Activated CD4-positive, alpha-beta T cell treated with anti-CD3 and anti-CD28 coated beads, Interleukin-2, amount 10 ng/mL, durations not matched to agents 24 days and 14 days (primary cell): ENCODE measurements at regions of chr7 and their contacts with region 1.

Region 1: DNA sequence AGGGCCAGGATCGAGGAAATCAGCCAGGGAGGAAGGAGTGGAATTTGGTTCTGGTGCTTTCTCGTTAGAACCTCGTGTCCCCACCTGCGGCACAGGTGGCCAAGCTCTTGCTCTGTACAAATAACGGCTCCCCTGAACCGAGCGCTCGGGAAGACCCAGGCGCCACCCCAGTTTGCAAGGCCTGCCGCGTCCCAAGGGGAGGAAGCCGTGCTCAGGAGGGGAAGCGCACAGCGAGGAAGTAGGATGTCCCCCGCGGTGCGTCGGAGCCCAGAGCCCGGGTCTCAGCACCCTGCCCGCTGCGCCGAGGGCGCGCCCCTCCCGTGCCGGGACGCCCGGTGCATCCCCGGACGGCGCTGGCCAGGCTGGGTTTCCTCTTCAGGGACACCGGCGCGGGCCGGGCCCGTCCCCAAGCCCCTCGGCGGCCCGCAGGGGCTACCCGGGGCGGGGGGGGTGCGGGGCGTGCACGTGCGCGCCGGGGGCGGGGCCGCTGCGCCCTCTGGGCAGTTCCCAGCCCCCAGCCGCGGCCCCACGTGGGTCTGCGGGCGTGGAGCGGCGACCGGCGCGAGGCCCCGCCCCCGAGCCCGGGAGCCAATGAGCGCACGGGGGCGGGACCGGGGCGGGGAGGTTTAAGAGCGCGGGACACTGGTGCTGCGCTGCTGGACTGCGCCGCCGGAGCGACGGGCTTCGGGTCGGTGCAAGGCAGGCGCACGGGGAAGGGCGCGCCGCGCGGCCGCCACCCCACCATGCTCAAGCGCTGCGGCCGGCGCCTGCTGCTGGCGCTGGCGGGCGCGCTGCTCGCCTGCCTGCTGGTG is at the start of gene LFNG:
- DNase-seq: peak; percentile 96
- H3K4me3 Mint-ChIP-seq: peak within 1 kb of the TSS; percentile 97
- H3K27ac Mint-ChIP-seq: peak within 1 kb of the TSS; percentile 91
- H3K4me1 Mint-ChIP-seq: peaks cover 35% of the 10 kb centered on the region
- H3K27me3 Mint-ChIP-seq: peaks cover 7% of the 10 kb centered on the region
- total RNA-seq, gene LFNG: 33.9 and 34.2 TPM in 2 replicates

Region 2: GRCh38 chr7:1473864-1474512 is 1045.3 kb before region 1 on chr7:
- intact Hi-C with region 1: no loop called
- DNase-seq: peak; percentile 94
- H3K4me3 Mint-ChIP-seq: no peak overlapping the region
- H3K27ac Mint-ChIP-seq: no peak overlapping the region
- H3K4me1 Mint-ChIP-seq: peaks cover 2% of the 10 kb centered on the region
- H3K27me3 Mint-ChIP-seq: no peaks in the 10 kb centered on the region

Region 3: DNA sequence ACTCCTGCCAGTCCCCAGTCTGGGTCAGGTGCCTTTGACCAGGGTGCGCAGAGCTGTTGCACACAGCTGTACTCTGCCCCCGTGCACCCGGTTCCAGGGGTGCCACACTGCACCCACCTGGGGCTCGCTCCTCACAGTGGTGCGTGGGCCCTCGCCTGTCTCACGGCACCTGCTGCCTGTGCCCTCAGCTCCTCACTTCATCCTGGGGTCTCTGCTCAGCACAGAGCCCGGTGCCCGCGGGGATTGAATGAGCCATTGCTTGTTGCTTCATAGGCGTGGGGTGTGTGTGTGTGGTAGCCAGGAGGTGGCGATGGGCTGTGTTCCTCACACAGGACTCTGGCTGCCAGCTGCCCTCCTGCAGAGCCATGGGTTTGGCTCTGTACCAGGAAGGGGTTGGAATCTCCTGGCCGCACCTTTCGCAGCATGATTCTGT is 146.2 kb before region 1 on chr7:
- intact Hi-C with region 1: no loop called
- DNase-seq: no peak
- H3K4me3 Mint-ChIP-seq: no peak overlapping the region
- H3K27ac Mint-ChIP-seq: no peak overlapping the region
- H3K4me1 Mint-ChIP-seq: peaks cover 4% of the 10 kb centered on the region
- H3K27me3 Mint-ChIP-seq: no peaks in the 10 kb centered on the region

Region 4: DNA sequence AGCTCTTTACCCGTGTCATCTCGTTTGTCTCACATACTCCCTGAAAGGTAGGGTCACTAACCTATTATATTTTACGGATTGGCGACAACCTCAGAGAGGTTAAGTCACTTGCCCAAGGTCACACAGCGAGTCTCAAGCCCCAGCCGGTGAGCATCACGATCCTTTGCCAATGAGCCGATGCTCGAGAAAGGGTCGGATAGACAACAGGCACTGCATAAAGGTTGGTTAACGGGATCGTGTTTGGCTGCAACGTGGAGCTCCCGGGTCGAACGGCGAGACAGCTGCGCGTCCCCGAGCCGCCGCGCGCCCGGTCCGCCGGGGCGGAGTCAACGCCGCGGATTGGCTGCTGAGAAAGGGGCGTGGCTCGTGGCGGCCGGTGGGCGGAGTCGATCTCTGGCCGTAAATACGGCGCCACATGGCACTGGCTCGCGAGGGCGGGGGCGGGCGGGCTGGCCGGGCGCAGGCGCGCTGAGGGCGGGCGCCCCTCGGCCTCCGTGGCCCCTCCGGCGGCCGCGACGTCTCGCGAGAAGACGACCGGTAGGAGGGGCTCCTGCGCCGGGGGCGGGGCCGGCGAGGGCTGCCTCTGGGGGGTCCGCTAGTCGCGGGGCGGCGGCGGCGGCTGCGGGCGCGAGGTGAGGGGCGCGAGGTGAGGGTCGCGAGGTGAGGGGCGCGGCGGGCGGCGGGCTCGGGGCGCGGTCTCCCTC is 116.2 kb before region 1 on chr7 and contains the start of gene CHST12:
- intact Hi-C with region 1: loop called (anchors 5 kb)
- DNase-seq: peak; percentile 99
- H3K4me3 Mint-ChIP-seq: peak within 1 kb of the TSS; percentile 91
- H3K27ac Mint-ChIP-seq: peak within 1 kb of the TSS; percentile 85
- H3K4me1 Mint-ChIP-seq: peaks cover 47% of the 10 kb centered on the region
- H3K27me3 Mint-ChIP-seq: no peaks in the 10 kb centered on the region
- total RNA-seq, gene CHST12: 5.8 and 6.4 TPM in 2 replicates

Region 5: GRCh38 chr7:2508327-2509215 is 10.8 kb before region 1 on chr7:
- intact Hi-C with region 1: loop called (anchors 1 kb)
- DNase-seq: peak; percentile 93
- H3K4me3 Mint-ChIP-seq: peak overlapping the region; percentile 67
- H3K27ac Mint-ChIP-seq: peak overlapping the region; percentile 81
- H3K4me1 Mint-ChIP-seq: peaks cover 39% of the 10 kb centered on the region
- H3K27me3 Mint-ChIP-seq: no peaks in the 10 kb centered on the region

Region 6: GRCh38 chr7:2555121-2556052 is 36.1 kb after region 1 on chr7 and contains the start of gene BRAT1:
- intact Hi-C with region 1: loop called (anchors 1 kb)
- DNase-seq: peak; percentile 97
- H3K4me3 Mint-ChIP-seq: peak within 1 kb of the TSS; percentile 90
- H3K27ac Mint-ChIP-seq: peak within 1 kb of the TSS; percentile 92
- H3K4me1 Mint-ChIP-seq: peaks cover 29% of the 10 kb centered on the region
- H3K27me3 Mint-ChIP-seq: no peaks in the 10 kb centered on the region
- total RNA-seq, gene BRAT1: 39.5 and 40.9 TPM in 2 replicates

Region 7: GRCh38 chr7:2709553-2710285 is 190.4 kb after region 1 on chr7:
- intact Hi-C with region 1: loop called (anchors 5 kb)
- DNase-seq: peak; percentile 94
- H3K4me3 Mint-ChIP-seq: peak overlapping the region; percentile 69
- H3K27ac Mint-ChIP-seq: peak overlapping the region; percentile 73
- H3K4me1 Mint-ChIP-seq: peaks cover 28% of the 10 kb centered on the region
- H3K27me3 Mint-ChIP-seq: peaks cover 13% of the 10 kb centered on the region